ENCODE measurements at regions of chr7 and their contacts with region 1.

Region 1: GRCh38 chr7:112770084-112770483 is 20.1 kb downstream of the TMEM168 start:
- DNase-seq: peak; percentile 87
- H3K4me3 Mint-ChIP-seq: no peak overlapping the region
- H3K27ac Mint-ChIP-seq: peak overlapping the region; percentile 82
- H3K4me1 Mint-ChIP-seq: peaks cover 11% of the 10 kb centered on the region
- H3K27me3 Mint-ChIP-seq: no peaks in the 10 kb centered on the region
- CTCF ChIP-seq: no peak

Region 2: DNA sequence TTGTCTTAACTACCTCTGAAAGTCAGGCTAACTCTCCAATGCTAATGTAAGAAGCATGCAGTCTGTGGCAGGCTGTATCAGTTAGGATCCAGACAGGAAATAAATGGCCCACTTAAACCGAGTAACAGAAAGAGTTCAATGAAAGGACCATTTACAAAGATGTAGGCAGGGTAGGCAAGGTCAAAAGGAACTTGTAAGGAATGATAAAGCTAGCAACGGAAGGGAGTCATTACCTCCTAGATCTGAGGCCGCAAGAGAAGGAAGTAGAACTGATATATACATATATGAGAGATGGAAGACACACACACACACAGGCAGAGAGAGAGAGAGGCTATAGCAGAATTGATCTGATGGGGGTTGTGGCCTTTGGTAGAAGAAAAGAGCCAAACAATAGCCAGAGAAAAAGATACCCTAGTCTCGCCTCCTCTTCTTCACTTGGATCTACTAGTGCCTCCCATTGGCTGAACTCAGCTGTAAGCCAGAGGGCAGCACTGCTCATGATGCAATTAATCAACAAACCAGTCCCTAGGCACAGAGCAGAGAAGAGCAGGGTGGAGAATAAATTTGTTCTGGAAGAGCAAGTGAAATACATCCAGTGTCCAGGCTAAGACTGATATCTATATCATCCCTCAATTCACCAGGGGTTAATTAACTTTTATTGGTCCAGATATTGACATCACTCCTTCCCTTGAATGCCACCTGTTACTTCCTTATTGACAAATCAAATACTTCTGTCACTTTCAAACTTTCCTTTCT is 198.1 kb before region 1 on chr7:
- CTCF ChIA-PET with region 1: no interaction called
- POLR2A ChIA-PET with region 1: no interaction called
- intact Hi-C with region 1: loop called (anchors 5 kb)
- DNase-seq: peak; percentile 35
- H3K4me3 Mint-ChIP-seq: no peak overlapping the region
- H3K27ac Mint-ChIP-seq: no peak overlapping the region
- H3K4me1 Mint-ChIP-seq: peaks cover 14% of the 10 kb centered on the region
- H3K27me3 Mint-ChIP-seq: no peaks in the 10 kb centered on the region
- CTCF ChIP-seq: no peak

Region 3: DNA sequence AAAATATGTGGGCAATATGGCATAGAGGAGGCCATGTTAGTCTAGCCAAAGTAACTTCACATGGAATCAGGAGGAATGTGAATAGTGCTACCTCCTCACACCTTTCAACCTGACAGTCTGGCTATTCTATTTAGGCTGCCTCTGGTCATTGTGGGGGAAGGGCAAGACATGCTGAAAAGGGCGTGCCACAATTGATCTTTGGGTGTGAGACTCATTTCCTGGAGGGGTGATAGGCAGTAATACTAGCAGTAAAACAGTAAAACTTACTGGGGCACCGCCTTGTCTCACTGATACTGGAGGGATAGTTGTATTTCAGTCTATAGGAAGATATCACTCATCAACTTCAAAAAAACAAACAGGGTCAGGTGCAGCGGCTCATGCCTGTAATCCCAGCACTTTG is 68.6 kb before region 1 on chr7:
- CTCF ChIA-PET with region 1: no interaction called
- POLR2A ChIA-PET with region 1: no interaction called
- intact Hi-C with region 1: no loop called
- DNase-seq: no peak
- H3K4me3 Mint-ChIP-seq: no peak overlapping the region
- H3K27ac Mint-ChIP-seq: no peak overlapping the region
- H3K4me1 Mint-ChIP-seq: no peaks in the 10 kb centered on the region
- H3K27me3 Mint-ChIP-seq: no peaks in the 10 kb centered on the region
- CTCF ChIP-seq: no peak

Region 4: GRCh38 chr7:112757337-112757736 is 12.7 kb before region 1 on chr7:
- CTCF ChIA-PET with region 1: interaction called, 3 read pairs
- POLR2A ChIA-PET with region 1: interaction called, 41 read pairs
- intact Hi-C with region 1: no loop called
- DNase-seq: no peak
- H3K4me3 Mint-ChIP-seq: no peak overlapping the region
- H3K27ac Mint-ChIP-seq: no peak overlapping the region
- H3K4me1 Mint-ChIP-seq: peaks cover 14% of the 10 kb centered on the region
- H3K27me3 Mint-ChIP-seq: no peaks in the 10 kb centered on the region
- CTCF ChIP-seq: no peak

Region 5: DNA sequence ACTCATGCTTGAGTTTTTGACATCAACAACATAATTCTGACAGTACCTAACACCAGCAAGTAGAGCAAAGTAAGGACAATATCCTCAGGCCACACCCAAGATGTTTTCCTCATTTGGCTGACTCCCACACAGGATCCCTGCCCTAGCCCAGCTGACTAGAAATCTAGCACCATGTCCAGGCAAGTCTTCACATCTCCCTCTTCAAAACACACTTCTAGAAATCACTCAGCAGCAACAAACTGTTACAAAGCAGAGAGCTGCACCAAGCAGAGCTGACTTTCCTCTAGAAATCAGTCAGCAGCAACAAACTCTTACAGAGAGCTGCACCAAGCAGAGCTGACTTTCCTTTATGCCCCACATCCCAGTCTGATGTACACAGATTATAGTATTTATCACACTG is 12.4 kb after region 1 on chr7:
- CTCF ChIA-PET with region 1: interaction called, 12 read pairs
- POLR2A ChIA-PET with region 1: interaction called, 165 read pairs
- intact Hi-C with region 1: no loop called
- DNase-seq: peak; percentile 38
- H3K4me3 Mint-ChIP-seq: peak overlapping the region; percentile 30
- H3K27ac Mint-ChIP-seq: peak overlapping the region; percentile 79
- H3K4me1 Mint-ChIP-seq: peaks cover 19% of the 10 kb centered on the region
- H3K27me3 Mint-ChIP-seq: no peaks in the 10 kb centered on the region
- CTCF ChIP-seq: no peak

Region 6: GRCh38 chr7:112789817-112790585 is 19.9 kb after region 1 on chr7 and contains the start of gene TMEM168:
- CTCF ChIA-PET with region 1: interaction called, 6 read pairs
- POLR2A ChIA-PET with region 1: interaction called, 165 read pairs
- intact Hi-C with region 1: loop called (anchors 2 kb)
- DNase-seq: peak; percentile 88
- H3K4me3 Mint-ChIP-seq: peak within 1 kb of the TSS; percentile 83
- H3K27ac Mint-ChIP-seq: peak within 1 kb of the TSS; percentile 83
- H3K4me1 Mint-ChIP-seq: peaks cover 33% of the 10 kb centered on the region
- H3K27me3 Mint-ChIP-seq: no peaks in the 10 kb centered on the region
- CTCF ChIP-seq: no peak
- total RNA-seq, gene TMEM168: 29.5 and 32.5 TPM in 2 replicates

Measured in MCF 10A (cell line).